Mammary epithelial cell (primary cell): ENCODE measurements at regions of chr18 and their contacts with region 1.

Region 1: DNA sequence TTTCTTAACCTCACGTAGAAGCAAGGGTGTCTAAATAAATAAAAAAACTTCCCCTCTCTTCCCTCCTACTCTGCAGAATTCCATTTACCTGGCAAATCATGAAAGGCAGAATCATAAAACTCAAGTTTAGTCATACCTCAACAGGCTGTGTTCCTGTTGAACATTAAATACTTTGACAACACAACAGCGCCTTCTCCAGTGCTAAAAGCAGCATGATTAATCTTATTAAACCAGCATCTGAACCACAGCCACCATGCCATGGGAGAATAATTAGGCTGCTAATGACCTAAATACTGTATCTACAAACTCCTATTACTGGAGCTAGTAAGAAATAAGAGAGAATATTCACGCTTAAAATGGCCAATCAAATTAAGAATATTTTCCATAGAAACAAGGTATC is 68.1 kb downstream of the CDH2 start:
- DNase-seq: peak; percentile 33
- H3K4me3 ChIP-seq: no peak overlapping the region
- H3K27ac ChIP-seq: no peak overlapping the region
- H3K4me1 ChIP-seq: no peaks in the 10 kb centered on the region
- H3K27me3 ChIP-seq: no peaks in the 10 kb centered on the region
- CTCF ChIP-seq: peak in 1 of 2 donors; percentile 26

Region 2: DNA sequence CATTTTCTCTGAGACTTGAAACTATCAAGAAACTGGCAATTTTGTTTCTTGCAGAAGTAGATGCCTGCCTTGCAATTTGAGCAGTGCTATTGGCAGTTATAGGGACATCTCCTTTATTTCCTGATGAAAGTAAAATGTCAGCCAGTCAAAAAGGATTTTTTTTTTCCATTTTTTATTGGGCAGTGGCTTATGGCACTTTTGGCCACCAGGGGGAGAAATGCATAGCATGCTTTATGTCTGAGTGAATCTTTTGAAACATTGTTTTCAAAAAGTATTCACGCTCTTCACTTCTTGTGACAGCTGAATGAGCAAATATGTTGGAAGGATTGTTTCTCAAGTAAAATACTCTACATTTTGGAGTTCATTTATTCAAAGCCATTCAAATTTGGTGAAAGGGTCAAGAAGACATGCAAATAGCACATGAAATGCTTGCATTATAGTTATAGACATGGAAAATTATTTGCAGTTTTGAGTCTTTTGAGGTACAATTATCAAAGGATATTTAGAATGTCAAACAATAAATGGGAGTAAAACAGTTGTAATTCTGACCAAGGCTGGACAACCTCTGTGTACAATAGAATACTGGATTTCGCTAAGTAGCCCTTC is 422.9 kb before region 1 on chr18:
- CTCF ChIA-PET with region 1: no interaction called
- dilution Hi-C with region 1: no loop called
- in situ Hi-C with region 1: no loop called
- intact Hi-C with region 1: loop called (anchors 2 kb)
- DNase-seq: peak; percentile 26
- H3K4me3 ChIP-seq: no peak overlapping the region
- H3K27ac ChIP-seq: no peak overlapping the region
- H3K4me1 ChIP-seq: no peaks in the 10 kb centered on the region
- H3K27me3 ChIP-seq: no peaks in the 10 kb centered on the region
- CTCF ChIP-seq: peak; percentile 77 to 80

Region 3: DNA sequence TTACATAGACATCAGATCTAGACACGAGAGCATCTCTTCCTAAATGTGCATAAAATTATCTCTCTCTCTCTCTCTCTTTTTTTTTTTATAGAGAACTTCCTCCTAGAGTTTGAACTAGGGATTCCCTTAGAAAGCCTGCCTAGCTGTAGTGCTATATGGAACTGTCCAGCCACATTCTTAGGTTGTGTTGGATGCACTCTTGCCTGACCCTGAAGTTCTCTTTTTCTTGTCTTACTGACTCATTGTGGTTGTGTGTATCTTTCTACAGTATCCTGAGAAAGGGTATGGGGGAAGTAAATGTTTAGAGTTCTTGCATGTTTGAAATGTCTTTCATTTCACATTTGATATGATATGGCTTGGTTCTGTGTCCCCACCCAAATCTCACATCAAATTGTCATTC is 300.1 kb before region 1 on chr18:
- CTCF ChIA-PET with region 1: no interaction called
- dilution Hi-C with region 1: no loop called
- in situ Hi-C with region 1: no loop called
- intact Hi-C with region 1: no loop called
- DNase-seq: peak; percentile 2
- H3K4me3 ChIP-seq: no peak overlapping the region
- H3K27ac ChIP-seq: no peak overlapping the region
- H3K4me1 ChIP-seq: no peaks in the 10 kb centered on the region
- H3K27me3 ChIP-seq: no peaks in the 10 kb centered on the region
- CTCF ChIP-seq: no peak

Region 4: GRCh38 chr18:28332071-28332470 is 223.3 kb after region 1 on chr18:
- CTCF ChIA-PET with region 1: no interaction called
- dilution Hi-C with region 1: no loop called
- in situ Hi-C with region 1: no loop called
- intact Hi-C with region 1: no loop called
- DNase-seq: no peak
- H3K4me3 ChIP-seq: no peak overlapping the region
- H3K27ac ChIP-seq: no peak overlapping the region
- H3K4me1 ChIP-seq: no peaks in the 10 kb centered on the region
- H3K27me3 ChIP-seq: no peaks in the 10 kb centered on the region
- CTCF ChIP-seq: no peak